CD8-positive, alpha-beta T cell (primary cell): ENCODE measurements at regions of chr20 and their contacts with region 1.

Region 1: GRCh38 chr20:19205977-19206396 is 6.5 kb upstream of the SLC24A3 start:
- DNase-seq: peak; percentile 25 to 77 (median 53)
- ATAC-seq: no peak
- H3K4me3 ChIP-seq: no peak overlapping the region
- H3K4me3 Mint-ChIP-seq: no peak overlapping the region
- H3K27ac ChIP-seq: no peak overlapping the region
- H3K27ac Mint-ChIP-seq: no peak overlapping the region
- H3K4me1 ChIP-seq: no peaks in the 10 kb centered on the region
- H3K4me1 Mint-ChIP-seq: no peaks in the 10 kb centered on the region
- H3K27me3 ChIP-seq: peaks cover 0 to 4% of the 10 kb centered on the region in 2 experiments
- H3K27me3 Mint-ChIP-seq: peaks cover 34% of the 10 kb centered on the region
- CTCF ChIP-seq: peak; percentile 72

Region 2: DNA sequence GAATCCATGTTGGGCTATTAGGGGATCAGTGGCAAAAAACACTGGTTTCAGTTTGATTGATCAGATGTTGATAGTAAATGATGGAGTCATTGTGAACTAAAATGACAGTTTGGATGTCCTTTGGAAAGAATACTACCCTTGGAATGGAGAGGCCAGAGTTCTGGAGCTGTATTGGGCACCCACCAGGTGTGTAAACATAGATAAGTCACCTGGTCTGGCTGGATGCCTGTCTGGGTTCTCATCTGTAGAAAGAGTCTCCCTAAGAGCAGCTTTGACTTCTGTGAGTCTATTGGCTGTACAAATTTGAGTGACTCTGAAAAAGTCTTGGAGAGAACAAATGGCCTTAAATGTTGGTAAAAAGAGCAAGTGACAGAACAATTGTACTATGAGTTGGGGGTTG is 277.4 kb before region 1 on chr20:
- CTCF ChIA-PET with region 1: no interaction called
- POLR2A ChIA-PET with region 1: no interaction called
- intact Hi-C with region 1: no loop called
- DNase-seq: no peak
- ATAC-seq: no peak
- H3K4me3 ChIP-seq: no peak overlapping the region
- H3K4me3 Mint-ChIP-seq: no peak overlapping the region
- H3K27ac ChIP-seq: no peak overlapping the region
- H3K27ac Mint-ChIP-seq: no peak overlapping the region
- H3K4me1 ChIP-seq: no peaks in the 10 kb centered on the region
- H3K4me1 Mint-ChIP-seq: no peaks in the 10 kb centered on the region
- H3K27me3 ChIP-seq: no peaks in the 10 kb centered on the region
- H3K27me3 Mint-ChIP-seq: no peaks in the 10 kb centered on the region
- CTCF ChIP-seq: no peak

Region 3: GRCh38 chr20:19003366-19004336 is 202.3 kb before region 1 on chr20:
- CTCF ChIA-PET with region 1: no interaction called
- POLR2A ChIA-PET with region 1: no interaction called
- intact Hi-C with region 1: no loop called
- DNase-seq: no peak
- ATAC-seq: no peak
- H3K4me3 ChIP-seq: no peak overlapping the region
- H3K4me3 Mint-ChIP-seq: no peak overlapping the region
- H3K27ac ChIP-seq: no peak overlapping the region
- H3K27ac Mint-ChIP-seq: no peak overlapping the region
- H3K4me1 ChIP-seq: no peaks in the 10 kb centered on the region
- H3K4me1 Mint-ChIP-seq: no peaks in the 10 kb centered on the region
- H3K27me3 ChIP-seq: no peaks in the 10 kb centered on the region
- H3K27me3 Mint-ChIP-seq: peaks cover 2% of the 10 kb centered on the region
- CTCF ChIP-seq: no peak

Region 4: DNA sequence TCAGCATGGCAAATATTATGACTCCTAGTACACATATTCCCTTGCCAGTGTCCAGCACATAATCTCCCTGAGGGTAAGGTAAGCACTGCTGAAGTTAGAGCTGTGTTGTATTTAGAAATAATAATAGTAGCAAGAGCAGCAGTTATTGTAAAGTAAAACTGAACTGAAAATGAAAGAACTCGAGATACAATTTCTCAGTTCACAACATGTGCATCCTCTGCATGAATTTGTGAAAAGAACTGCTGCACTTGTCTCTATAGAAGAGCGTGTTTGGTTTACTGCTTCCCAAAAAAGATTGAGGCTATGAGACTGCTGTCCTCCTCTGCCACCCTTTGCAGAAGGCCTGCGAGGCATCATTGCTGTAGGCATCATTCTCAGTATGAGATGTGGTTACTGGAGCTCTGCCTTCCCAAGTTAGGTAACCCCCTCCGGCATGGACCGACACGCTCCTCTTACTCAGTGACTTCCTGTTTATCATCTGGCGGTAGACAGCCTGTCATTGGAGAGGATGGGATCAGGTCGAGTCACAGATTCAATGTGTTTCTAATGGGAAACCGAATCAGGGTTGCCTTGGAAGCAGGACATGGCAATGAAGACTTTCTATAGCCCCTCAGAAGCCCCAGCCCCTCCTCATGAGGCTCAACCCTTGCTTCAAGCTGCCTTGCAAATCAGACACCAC is 54.6 kb after region 1 on chr20:
- CTCF ChIA-PET with region 1: no interaction called
- POLR2A ChIA-PET with region 1: no interaction called
- intact Hi-C with region 1: no loop called
- DNase-seq: peak in 1 of 9 experiments; percentile 18
- ATAC-seq: no peak
- H3K4me3 ChIP-seq: no peak overlapping the region
- H3K4me3 Mint-ChIP-seq: no peak overlapping the region
- H3K27ac ChIP-seq: no peak overlapping the region
- H3K27ac Mint-ChIP-seq: no peak overlapping the region
- H3K4me1 ChIP-seq: no peaks in the 10 kb centered on the region
- H3K4me1 Mint-ChIP-seq: no peaks in the 10 kb centered on the region
- H3K27me3 ChIP-seq: no peaks in the 10 kb centered on the region
- H3K27me3 Mint-ChIP-seq: peaks cover 4% of the 10 kb centered on the region
- CTCF ChIP-seq: no peak

Region 5: DNA sequence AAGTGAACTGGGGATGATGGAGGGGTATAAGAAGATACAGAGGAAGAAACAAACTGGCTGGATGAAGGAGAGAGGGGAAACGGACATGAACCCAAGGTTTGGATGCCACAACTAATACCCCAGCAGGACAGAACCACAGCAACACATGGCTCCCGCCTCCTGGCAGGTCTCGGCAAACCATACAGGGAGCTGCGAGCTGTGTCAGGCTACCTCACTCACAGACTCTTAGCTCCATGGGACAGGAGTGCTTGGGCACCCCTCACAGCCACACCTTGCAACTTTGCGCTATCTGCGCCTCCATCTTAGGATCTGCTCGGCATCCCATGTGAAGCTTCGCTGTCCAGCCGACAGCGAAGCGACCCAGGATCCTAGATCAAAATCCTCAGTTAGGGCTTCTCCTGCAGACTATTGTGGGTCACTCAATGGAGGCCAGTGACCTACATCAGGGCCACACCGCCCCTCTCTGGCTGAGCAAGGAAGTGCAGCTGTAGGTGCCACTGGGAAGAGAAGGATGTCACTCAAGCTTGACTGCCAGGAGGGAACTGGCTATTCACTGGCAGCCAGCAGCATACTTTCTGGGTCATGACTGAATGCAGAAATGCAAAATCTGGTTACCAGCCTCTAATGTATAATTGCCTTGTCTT is 377.7 kb after region 1 on chr20:
- CTCF ChIA-PET with region 1: interaction called, 3 read pairs
- POLR2A ChIA-PET with region 1: no interaction called
- intact Hi-C with region 1: loop called (anchors 2 to 5 kb)
- DNase-seq: peak in 6 of 9 experiments; percentile 10 to 60 (median 42)
- ATAC-seq: no peak
- H3K4me3 ChIP-seq: no peak overlapping the region
- H3K4me3 Mint-ChIP-seq: no peak overlapping the region
- H3K27ac ChIP-seq: no peak overlapping the region
- H3K27ac Mint-ChIP-seq: no peak overlapping the region
- H3K4me1 ChIP-seq: no peaks in the 10 kb centered on the region
- H3K4me1 Mint-ChIP-seq: no peaks in the 10 kb centered on the region
- H3K27me3 ChIP-seq: no peaks in the 10 kb centered on the region
- H3K27me3 Mint-ChIP-seq: peaks cover 2% of the 10 kb centered on the region
- CTCF ChIP-seq: peak; percentile 19

Region 6: DNA sequence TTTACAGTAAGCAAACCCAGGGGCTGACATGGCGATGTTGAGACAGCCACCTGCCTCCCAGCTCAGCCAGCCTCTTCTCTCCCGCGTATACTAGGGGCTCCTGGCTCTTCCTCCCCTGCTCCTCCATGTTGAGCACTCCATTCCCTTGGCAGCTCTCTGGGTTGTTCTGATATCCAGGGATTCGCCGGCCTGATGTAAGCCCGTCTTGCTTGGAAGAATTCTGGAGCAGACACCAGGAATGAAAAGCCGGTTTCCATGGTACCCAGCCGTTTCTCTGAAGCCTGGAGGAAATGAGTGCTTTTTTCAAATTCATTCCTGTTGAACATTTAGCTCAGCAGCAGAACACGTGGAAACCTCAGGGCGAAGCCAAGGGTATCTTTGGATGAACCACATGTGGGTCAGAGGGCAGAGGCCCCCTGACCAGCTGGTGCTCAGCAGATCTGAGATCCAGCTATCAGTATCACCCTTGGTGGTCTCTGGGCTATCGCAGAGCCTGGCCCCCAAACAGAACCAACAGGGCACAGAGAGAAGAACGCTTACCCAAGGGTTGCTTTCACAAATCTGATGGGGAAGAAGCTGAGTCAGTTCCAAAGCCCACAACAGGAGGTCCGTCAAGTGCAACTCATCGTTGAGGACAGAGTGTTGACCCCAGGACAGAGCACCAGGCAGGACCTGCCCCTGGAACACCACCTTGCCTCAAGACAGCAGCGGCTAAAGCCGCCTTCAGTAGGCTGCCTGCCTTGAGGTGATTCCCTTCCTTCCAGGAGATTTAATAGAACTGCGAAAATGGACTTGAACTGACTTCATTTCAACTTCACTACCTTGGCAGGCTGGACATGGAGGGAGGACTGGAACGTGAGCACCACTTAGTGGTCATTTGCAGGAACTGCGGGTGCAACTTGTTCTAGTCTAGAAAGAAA is 456.0 kb after region 1 on chr20:
- CTCF ChIA-PET with region 1: interaction called, 18 read pairs
- POLR2A ChIA-PET with region 1: no interaction called
- intact Hi-C with region 1: loop called in 1 of 2 experiments (anchors 1 kb)
- DNase-seq: peak in 6 of 9 experiments; percentile 8 to 59 (median 48)
- ATAC-seq: no peak
- H3K4me3 ChIP-seq: no peak overlapping the region
- H3K4me3 Mint-ChIP-seq: no peak overlapping the region
- H3K27ac ChIP-seq: no peak overlapping the region
- H3K27ac Mint-ChIP-seq: no peak overlapping the region
- H3K4me1 ChIP-seq: no peaks in the 10 kb centered on the region
- H3K4me1 Mint-ChIP-seq: no peaks in the 10 kb centered on the region
- H3K27me3 ChIP-seq: no peaks in the 10 kb centered on the region
- H3K27me3 Mint-ChIP-seq: peaks cover 26% of the 10 kb centered on the region
- CTCF ChIP-seq: peak; percentile 92